Tibial artery (tissue), 4 donors: ENCODE measurements at regions of chr11 and their contacts with region 1.

Region 1: DNA sequence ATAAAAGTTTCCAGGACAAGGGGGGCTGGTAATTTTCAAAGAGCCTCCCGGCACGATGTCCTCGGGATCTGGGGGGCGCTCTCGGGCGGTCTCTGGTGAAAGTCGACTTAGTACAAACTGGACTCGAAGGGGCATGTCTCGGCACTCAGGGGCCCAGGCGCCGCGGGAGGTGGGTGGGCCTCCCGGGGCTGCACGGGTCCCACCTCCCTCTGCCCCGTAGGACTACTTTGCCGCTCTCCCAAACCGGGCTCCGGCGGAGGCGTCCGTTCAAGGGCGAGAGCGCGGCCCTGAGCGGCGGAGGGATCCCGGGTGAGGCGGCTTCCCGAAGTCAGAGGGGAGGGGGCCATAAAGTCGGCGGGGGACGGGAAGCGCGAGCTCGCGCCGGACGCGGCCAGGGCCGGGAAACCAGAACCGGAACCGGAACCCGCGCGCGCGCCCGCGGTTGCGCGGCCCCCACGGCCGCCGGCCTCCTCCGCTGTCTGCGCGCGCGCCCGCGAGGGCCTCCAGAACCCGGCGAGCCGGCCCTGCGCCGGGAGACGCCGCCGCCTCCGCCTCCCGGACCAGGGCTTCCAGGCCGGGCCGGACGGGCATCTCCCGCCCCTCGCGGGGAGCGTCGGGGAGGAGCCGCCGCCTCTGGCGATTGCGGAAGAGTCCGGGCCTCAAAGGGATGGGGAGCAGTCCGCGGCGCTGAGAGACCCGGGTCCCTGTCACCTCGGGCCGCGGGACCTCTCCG is at the start of gene ARHGEF12:
- DNase-seq: peak; percentile 92 to 97
- H3K4me3 ChIP-seq: peak within 1 kb of the TSS; percentile 82 to 88
- H3K27ac ChIP-seq: peak within 1 kb of the TSS; percentile 96 to 98
- H3K4me1 ChIP-seq: peaks cover 0 to 67% (median 44%) of the 10 kb centered on the region in 4 donors
- H3K27me3 ChIP-seq: no peaks in the 10 kb centered on the region
- CTCF ChIP-seq: peak; percentile 7 to 14

Region 2: DNA sequence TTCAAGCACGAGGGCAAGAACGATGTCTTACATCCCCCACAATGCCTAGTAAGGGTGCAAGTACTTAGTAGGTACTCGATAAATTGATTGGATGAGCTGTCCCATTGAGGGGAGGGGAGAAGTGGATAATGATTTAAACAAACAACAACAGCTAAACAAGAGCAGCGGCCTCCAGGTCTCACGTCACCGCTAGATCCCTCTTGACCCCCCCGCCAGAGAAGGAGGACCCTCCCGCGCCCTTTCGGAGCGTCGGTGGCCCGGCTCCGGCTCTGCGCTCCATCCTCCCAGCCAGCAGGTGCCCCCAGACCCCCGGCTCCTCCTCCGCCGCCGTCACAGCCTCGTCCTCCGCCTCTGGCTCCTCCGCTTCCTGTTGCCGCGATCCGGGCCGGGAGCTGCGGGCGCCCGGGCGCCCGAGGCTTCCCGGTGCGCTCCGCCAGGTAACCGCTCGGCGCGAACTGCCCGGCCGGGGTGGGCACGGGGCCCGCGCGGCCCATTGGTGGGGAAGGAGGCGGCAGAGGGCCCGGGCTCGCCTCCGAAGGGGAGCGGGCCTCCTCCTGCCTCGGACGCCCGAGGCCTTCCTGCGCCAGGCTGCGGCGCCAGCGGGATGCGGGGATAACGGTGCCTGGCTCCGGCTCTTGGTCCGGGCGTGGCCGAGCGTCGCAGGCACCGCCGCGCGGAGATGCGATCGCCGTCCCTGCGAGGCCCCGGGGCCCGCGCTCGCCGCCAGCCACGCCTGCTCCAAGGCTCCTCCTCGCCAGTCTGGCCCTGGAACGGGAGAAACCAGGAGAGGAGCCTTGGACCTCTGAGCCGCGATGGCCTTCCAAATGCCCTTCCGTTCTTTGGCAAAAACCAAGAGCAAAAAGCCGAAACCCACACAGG is 10.9 kb before region 1 on chr11 and contains the start of gene TLCD5:
- intact Hi-C with region 1: loop called (anchors 1 kb)
- DNase-seq: peak; percentile 55 to 84
- H3K4me3 ChIP-seq: peak within 1 kb of the TSS; percentile 88 to 90
- H3K27ac ChIP-seq: peak within 1 kb of the TSS; percentile 98
- H3K4me1 ChIP-seq: peaks cover 0 to 29% (median 20%) of the 10 kb centered on the region in 4 donors
- H3K27me3 ChIP-seq: no peaks in the 10 kb centered on the region
- CTCF ChIP-seq: peak in 1 of 2 experiments; percentile 13

Region 3: DNA sequence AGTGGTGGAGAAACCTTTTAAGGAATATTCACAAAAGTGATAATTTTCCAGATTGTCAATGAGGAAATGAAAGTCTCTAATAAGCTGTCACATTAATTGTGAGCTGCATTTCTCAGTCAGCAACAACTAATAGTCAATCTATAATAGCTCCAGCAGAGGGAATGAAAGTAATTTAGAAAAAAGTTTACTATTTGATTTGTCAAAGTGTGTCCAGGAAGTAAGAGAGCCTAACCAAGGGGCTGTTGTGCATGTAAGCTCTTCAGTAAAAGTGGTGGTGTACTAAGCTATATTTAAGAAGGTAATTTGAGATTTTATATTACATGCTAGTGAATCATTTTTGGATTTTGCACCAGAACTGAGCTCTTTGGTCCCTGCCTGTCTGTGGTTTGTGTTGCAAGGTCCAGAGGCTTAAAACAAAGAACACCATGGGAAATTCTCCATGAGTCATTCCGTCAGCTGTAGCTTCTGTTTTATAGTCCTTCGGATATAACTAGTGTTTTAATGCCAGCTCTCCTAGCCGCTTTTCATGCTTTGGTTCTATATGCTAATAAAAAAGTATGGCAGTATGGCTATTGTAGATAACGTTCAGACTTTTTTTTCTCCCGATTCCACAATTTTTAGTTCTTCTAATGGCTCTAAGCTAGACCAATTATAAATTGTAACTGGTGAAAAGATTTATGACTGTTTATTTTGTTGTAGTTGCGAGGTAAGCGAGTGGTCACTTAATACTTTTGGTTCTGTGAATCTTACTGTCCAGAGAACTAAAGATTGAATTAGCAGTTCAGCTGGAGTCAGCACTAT is 64.7 kb after region 1 on chr11:
- intact Hi-C with region 1: no loop called
- DNase-seq: peak in 1 of 2 donors; percentile 37
- H3K4me3 ChIP-seq: peak overlapping the region in 1 of 2 donors; percentile 4
- H3K27ac ChIP-seq: no peak overlapping the region
- H3K4me1 ChIP-seq: peaks cover 0 to 34% (median 15%) of the 10 kb centered on the region in 4 donors
- H3K27me3 ChIP-seq: no peaks in the 10 kb centered on the region
- CTCF ChIP-seq: no peak

Region 4: DNA sequence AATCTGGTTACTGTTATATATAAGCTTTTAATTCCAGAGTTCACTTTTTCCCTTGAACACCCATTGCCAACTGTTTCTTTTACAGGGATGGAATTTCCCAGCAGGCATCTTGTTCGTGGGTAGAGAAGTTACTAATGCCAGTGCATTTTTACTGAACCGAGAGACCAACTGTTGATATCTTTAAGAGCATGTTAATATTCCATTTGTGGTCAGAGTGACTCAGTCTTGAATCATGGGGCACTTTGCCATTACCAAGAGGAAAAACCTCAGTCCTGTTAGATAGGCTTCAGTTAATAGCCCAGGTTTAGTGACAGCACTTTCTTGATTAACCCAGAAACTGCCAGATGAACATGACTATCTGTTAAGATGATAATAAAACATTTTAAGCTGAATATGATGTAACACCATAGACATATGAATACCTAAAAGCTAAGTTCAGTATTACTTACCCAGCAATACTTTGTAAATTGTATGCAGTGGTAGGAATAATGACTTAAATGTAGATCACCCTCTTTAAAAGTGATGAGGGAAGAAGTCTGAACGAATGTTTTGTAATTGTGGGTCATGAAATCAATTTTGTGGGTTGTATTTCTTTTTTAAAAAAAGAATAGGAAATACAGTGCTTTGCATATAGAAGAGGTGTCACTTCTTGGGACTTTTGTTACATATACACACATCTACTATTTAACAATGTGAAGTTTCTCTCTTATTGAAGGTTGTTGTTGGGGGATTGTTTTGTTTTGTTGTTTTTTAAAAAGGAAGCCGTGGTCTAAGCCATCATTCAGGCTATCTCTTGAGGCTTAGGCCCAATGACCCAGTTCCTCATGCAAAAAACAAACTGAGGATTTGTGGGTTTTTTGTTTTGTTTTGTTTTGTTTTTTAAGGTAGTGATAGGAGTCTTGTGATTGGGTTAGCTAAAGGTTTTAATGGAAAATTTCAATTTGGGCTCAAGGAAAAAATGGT is 96.3 kb after region 1 on chr11:
- intact Hi-C with region 1: loop called (anchors 10 kb)
- DNase-seq: peak in 1 of 2 donors; percentile 65
- H3K4me3 ChIP-seq: peak overlapping the region; percentile 11 to 21
- H3K27ac ChIP-seq: peak overlapping the region; percentile 63 to 80
- H3K4me1 ChIP-seq: peaks cover 0 to 23% (median 8%) of the 10 kb centered on the region in 4 donors
- H3K27me3 ChIP-seq: no peaks in the 10 kb centered on the region
- CTCF ChIP-seq: no peak